Common myeloid progenitor, CD34-positive (primary cell): ENCODE measurements at regions of chr9 and their contacts with region 1.

Region 1: GRCh38 chr9:33924978-33925797 is 108.2 kb downstream of the UBE2R2 start:
- DNase-seq: peak; percentile 17 to 32 (median 22)
- H3K4me3 ChIP-seq: no peak overlapping the region
- H3K27ac ChIP-seq: no peak overlapping the region
- H3K4me1 ChIP-seq: no peaks in the 10 kb centered on the region
- H3K27me3 ChIP-seq: no peaks in the 10 kb centered on the region

Region 2: DNA sequence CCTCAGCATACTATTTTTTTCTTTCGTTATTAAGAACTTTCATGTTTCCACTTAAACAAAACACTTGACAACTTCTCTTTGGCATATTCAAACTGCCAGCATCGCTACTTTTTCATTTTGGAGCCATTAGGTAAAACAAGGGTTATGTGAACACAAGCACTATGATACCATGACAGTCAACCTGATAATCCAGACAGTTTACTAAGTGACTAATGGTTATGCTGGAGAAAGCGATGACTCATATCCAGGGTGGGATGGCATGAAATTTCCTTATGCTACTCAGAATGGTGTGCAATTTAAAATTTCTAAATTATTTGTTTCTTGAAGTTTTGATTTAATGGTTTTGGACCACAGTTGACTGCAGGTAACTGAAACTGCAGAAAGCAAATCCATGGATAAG is 159.8 kb before region 1 on chr9:
- CTCF ChIA-PET with region 1: no interaction called
- POLR2A ChIA-PET with region 1: no interaction called
- DNase-seq: no peak
- H3K4me3 ChIP-seq: no peak overlapping the region
- H3K27ac ChIP-seq: no peak overlapping the region
- H3K4me1 ChIP-seq: no peaks in the 10 kb centered on the region
- H3K27me3 ChIP-seq: no peaks in the 10 kb centered on the region

Region 3: GRCh38 chr9:33867747-33868439 is 57.3 kb before region 1 on chr9:
- CTCF ChIA-PET with region 1: no interaction called
- POLR2A ChIA-PET with region 1: no interaction called
- DNase-seq: no peak
- H3K4me3 ChIP-seq: no peak overlapping the region
- H3K27ac ChIP-seq: no peak overlapping the region
- H3K4me1 ChIP-seq: peaks cover 0 to 7% (median 1%) of the 10 kb centered on the region in 4 experiments
- H3K27me3 ChIP-seq: no peaks in the 10 kb centered on the region

Region 4: DNA sequence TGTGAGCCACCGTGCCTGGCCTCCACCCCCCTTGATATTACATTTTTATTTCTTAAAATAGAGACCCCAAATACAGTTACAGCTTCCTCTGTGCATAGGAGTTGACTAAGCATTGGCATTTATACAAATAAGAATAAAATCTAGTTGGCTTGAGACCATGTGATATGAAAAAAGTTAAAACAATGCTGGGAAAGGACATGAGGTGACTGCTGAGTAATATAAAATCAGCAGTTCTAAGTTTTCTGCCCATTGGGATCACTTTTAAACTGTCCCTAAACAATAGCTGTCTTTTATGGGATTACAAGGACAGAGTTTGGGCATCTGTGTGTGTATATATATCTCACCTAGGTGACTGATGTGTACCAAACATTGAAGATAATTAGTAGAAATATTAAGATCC is 11.6 kb before region 1 on chr9:
- CTCF ChIA-PET with region 1: interaction called, 31 read pairs
- POLR2A ChIA-PET with region 1: no interaction called
- DNase-seq: no peak
- H3K4me3 ChIP-seq: no peak overlapping the region
- H3K27ac ChIP-seq: no peak overlapping the region
- H3K4me1 ChIP-seq: no peaks in the 10 kb centered on the region
- H3K27me3 ChIP-seq: no peaks in the 10 kb centered on the region

Region 5: GRCh38 chr9:34025062-34025461 is 99.9 kb after region 1 on chr9:
- CTCF ChIA-PET with region 1: no interaction called
- POLR2A ChIA-PET with region 1: no interaction called
- DNase-seq: no peak
- H3K4me3 ChIP-seq: no peak overlapping the region
- H3K27ac ChIP-seq: no peak overlapping the region
- H3K4me1 ChIP-seq: no peaks in the 10 kb centered on the region
- H3K27me3 ChIP-seq: no peaks in the 10 kb centered on the region